Activated CD4-positive, alpha-beta T cell treated with anti-CD3 and anti-CD28 coated beads for 36 hours (primary cell): ENCODE measurements at regions of chr1 and their contacts with region 1.

Region 1: GRCh38 chr1:212712451-212713303 is 13.0 kb upstream of the BATF3 start:
- DNase-seq: peak; percentile 48
- ATAC-seq: peak; percentile 90
- H3K4me3 Mint-ChIP-seq: no peak overlapping the region
- H3K27ac Mint-ChIP-seq: peak overlapping the region; percentile 72
- H3K4me1 Mint-ChIP-seq: peaks cover 40% of the 10 kb centered on the region
- H3K27me3 Mint-ChIP-seq: peaks cover 2% of the 10 kb centered on the region

Region 2: DNA sequence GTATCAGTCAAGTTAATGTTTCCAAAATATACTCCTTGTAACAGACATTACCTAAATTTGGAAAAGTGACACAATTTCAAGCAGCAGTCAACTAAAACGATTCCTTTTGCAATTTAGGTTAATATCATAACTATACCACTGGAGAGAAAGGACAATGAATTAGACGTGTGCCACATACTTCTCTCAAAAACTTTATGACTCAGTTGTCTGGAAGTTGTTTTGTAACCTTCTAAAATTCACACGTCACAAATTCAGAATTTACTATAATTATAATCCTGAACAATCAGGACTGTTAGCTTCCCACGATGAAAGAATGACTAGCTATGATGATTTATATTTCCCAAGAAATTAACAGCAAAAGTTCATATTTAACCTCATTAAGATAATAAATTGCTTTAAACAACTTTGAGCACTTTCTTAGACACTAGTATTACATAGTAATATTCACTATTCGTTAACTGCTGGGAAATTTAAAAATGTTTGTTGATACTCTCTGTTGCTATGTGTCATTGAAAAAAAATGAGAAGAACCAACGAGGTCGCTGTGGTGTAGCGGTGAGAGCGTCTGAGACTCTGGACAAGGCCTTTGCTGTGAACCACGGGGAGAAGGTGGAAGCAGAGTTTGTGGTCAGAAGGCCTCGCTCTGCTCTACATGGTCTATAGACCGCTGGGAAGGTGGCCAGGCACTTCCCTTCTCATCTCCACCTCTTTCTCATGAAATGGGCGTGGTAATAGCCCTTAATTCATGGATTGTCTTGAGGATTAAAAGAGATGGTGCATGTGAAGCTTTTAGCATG is 14.9 kb after region 1 on chr1:
- CTCF ChIA-PET with region 1: interaction called, 5 read pairs
- POLR2A ChIA-PET with region 1: interaction called, 28 read pairs
- intact Hi-C with region 1: loop called in 1 of 2 experiments (anchors 2 kb)
- DNase-seq: peak; percentile 53
- ATAC-seq: peak; percentile 49
- H3K4me3 Mint-ChIP-seq: no peak overlapping the region
- H3K27ac Mint-ChIP-seq: peak overlapping the region; percentile 83
- H3K4me1 Mint-ChIP-seq: peaks cover 58% of the 10 kb centered on the region
- H3K27me3 Mint-ChIP-seq: no peaks in the 10 kb centered on the region

Region 3: DNA sequence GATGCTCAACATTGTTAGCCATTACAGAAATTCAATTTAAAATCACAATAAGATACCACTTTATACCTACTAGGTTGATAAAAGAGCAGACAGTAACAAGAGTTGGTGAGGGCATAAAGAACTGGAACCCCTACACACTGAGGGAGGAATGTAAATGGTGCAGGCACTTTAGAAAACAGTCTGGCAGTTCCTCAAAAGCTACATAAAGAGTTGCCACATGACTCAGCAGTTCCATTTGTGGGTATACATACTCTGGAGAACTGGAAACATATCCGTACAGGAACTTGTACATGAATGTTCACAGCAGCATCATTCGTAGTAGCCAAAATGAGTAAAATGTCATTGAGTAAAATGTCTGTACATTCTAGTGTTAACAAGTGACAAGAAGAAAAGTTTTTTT is 61.9 kb after region 1 on chr1:
- CTCF ChIA-PET with region 1: no interaction called
- POLR2A ChIA-PET with region 1: no interaction called
- intact Hi-C with region 1: loop called in 1 of 2 experiments (anchors 2 kb)
- DNase-seq: no peak
- ATAC-seq: peak; percentile 17
- H3K4me3 Mint-ChIP-seq: no peak overlapping the region
- H3K27ac Mint-ChIP-seq: no peak overlapping the region
- H3K4me1 Mint-ChIP-seq: peaks cover 38% of the 10 kb centered on the region
- H3K27me3 Mint-ChIP-seq: no peaks in the 10 kb centered on the region

Region 4: DNA sequence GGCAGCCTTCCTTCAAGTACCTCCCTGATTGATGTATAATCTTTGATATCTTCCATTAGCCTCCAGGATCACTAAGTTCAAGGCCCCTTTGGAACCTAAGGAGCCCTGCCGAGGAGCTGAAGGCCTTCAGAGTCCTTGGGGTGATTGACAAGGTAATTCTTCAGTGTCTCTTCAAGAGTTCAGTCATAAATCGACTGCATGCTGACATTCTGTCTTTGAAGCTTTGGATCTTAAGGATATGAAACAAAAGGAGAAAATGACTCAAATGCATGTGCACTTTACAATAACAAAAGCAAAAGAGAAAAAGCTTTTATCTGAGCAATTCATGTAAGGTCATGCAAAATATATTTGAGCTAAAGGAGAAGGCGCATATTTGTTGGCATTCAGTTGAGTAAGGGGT is 463.7 kb after region 1 on chr1:
- CTCF ChIA-PET with region 1: no interaction called
- POLR2A ChIA-PET with region 1: no interaction called
- intact Hi-C with region 1: no loop called
- DNase-seq: no peak
- ATAC-seq: no peak
- H3K4me3 Mint-ChIP-seq: no peak overlapping the region
- H3K27ac Mint-ChIP-seq: no peak overlapping the region
- H3K4me1 Mint-ChIP-seq: no peaks in the 10 kb centered on the region
- H3K27me3 Mint-ChIP-seq: no peaks in the 10 kb centered on the region